HCT116 (cell line): ENCODE measurements at regions of chr4 and their contacts with region 1.

Region 1: DNA sequence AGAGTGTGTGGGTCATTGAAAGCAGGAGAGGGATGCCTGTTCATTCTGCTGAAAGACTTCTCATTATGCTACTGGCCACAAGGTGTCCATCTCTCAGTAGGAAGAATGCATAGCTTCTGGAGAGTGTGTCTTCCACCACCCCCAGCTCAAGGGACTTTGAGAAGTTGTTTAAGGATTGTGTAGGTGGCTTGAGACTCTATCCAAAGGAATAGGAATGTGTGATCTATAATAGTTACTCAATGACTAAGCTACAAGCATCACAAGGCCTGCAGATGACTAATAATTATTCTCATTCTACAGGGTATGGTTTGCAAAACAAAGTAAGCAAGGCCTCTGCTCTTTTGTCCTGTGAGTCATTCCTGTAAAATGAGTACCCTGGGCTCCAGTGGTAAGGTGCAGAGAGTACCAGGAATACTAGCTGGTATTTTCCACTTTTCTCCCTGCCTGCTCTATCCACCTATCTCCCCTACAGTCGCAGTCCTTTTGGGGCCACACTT is 279.8 kb upstream of the BOD1L1 start:
- DNase-seq: no peak
- ATAC-seq: peak; percentile 64
- H3K4me3 ChIP-seq: no peak overlapping the region
- H3K27ac ChIP-seq: no peak overlapping the region
- H3K4me1 ChIP-seq: peaks cover 7 to 8% of the 10 kb centered on the region in 2 experiments; a peak in 3 of 4 replicates
- H3K27me3 ChIP-seq: no peaks in the 10 kb centered on the region
- CTCF ChIP-seq: no peak
- POLR2A ChIP-seq: no peak
- RAD21 ChIP-seq: 0 out of 2 replicates have a peak, but pooled peaks have one; percentile 3

Region 2: GRCh38 chr4:13966231-13967195 is 59.2 kb after region 1 on chr4:
- CTCF ChIA-PET with region 1: no interaction called
- POLR2A ChIA-PET with region 1: no interaction called
- RAD21 ChIA-PET with region 1: no interaction called
- intact Hi-C with region 1: loop called (anchors 10 kb)
- DNase-seq: no peak
- ATAC-seq: no peak
- H3K4me3 ChIP-seq: no peak overlapping the region
- H3K27ac ChIP-seq: no peak overlapping the region
- H3K4me1 ChIP-seq: no peaks in the 10 kb centered on the region
- H3K27me3 ChIP-seq: no peaks in the 10 kb centered on the region
- CTCF ChIP-seq: no peak
- POLR2A ChIP-seq: no peak
- RAD21 ChIP-seq: no peak